Activated CD4-positive, alpha-beta memory T cell treated with anti-CD3 and anti-CD28 coated beads, Interleukin-2, amount 10 ng/mL, durations not matched to agents 7 days and 5 days (primary cell): ENCODE measurements at regions of chr13 and their contacts with region 1.

Region 1: DNA sequence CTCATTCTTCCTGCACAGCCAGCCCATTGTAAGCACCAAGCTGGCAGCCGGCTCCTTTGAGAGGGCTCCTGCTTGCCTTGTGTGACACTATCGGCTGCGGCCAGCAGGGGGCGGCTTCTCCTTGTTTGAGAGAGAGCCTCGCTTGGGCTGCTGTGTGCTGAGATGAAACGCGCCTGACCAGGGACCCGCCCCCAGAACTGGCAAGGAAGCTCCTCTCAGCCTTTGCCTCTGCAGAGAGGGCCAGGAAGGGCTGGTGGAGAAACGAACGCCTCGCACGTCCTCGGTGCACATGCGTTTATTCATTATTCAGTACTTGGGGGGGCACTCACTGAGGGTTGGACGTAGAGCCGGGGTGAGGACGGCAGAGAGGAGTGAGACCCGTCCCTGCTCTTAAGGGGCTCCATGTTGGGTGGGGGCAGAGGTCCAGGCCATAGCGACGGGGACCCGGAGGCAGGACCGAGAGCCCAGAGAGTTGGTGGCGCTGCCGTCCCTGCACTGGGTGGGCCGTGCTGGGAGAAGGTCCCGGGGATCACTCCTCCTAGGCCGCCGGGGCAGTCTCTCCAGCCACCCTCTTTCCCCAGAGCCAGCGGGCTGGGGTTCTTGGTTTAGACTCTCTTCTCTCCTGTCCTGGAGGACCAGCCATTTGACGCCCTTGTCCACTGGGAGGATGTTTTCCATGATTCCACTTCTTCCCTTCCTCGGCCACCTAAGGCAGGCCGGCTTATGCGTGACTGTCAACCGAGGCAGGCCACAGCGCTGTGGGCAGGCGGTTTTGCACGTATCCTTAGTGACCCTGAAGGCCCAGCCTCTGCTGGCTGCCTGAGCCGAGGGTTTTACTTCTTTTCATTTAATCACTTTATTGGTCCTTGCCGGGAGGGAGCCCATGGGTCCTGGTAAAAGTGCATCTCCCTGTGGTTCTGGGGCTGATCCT is 174.5 kb downstream of the KATNAL1 start:
- DNase-seq: peak; percentile 98
- H3K4me3 Mint-ChIP-seq: no peak overlapping the region
- H3K27ac Mint-ChIP-seq: peak overlapping the region; percentile 21
- H3K4me1 Mint-ChIP-seq: peaks cover 11% of the 10 kb centered on the region
- H3K27me3 Mint-ChIP-seq: no peaks in the 10 kb centered on the region

Region 2: DNA sequence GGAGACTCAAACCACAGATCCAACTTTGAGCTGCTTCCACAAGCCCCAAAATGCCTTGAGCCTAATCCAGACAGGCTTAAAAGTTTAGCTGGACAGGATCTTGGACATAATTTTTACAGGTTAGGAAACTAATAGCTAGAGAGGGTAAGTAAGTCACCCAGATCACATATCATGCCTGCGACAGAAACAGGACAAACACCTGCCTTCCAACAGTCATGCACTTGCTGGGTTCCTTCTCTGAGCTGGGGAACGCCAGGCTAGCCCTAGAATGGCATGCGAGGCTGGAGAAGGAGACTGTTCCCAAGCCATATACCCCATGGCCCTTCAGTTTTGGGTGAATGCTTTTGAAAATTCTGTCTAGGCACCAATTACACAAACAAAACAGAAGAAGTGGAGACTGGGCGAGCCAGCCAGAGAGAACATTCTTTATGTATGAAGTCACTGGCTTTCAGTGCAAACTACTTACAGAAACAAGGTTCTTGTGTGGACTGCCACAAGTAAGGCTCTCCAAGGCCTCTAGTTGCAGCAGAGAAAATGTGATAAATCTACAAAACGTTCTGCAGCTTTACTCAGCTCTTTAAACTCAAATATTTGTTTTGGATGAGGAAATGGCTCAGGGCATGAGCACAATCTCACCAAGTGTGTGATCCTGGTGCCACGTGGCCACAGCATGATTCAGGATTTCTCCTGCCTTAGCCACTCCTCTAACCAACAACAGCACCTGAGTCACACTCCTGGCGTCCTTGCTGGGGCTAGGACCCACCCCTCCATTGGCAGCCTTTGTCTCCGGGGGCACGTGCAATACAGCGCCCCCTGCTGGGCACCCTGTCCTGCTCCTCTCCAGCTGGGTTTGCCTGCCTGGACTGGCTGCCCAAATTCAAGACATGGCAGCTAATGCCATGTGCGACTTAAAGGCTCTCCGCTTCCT is 209.1 kb before region 1 on chr13:
- CTCF ChIA-PET with region 1: no interaction called
- POLR2A ChIA-PET with region 1: no interaction called
- DNase-seq: peak; percentile 60
- H3K4me3 Mint-ChIP-seq: no peak overlapping the region
- H3K27ac Mint-ChIP-seq: no peak overlapping the region
- H3K4me1 Mint-ChIP-seq: peaks cover 38% of the 10 kb centered on the region
- H3K27me3 Mint-ChIP-seq: no peaks in the 10 kb centered on the region

Region 3: DNA sequence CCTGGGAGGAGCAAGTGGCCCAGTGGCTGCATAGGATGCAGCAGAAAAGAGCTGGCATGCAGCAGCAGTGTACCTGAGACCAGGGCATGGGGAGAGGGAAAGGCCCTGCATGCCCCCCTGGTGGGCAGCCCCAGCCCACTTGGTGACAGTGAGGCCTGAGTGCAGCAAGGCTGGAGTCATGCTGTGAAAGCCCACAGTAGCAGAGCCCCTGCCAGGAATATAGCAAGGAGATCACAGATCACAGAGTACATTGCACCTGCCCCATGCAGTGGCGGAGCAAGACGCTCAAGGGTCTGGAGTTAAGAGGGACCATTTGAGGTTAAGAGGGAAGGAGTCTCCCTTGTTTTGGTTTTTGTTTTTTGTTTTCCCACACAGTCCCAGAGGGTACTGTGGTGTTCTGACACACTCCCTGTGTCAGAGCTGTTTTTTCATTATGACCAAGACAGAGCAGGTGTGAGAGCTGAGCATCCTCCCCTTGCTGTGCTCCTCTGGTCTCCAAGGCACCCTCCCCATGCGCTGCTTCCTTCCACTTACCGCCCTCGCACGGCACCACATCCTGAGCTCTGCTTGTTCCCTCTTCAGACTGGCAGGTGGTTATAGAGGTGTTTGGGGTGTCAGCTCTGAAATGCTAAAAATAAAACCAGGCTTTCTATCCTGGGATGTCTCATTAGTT is 197.4 kb before region 1 on chr13:
- CTCF ChIA-PET with region 1: interaction called, 12 read pairs
- POLR2A ChIA-PET with region 1: no interaction called
- DNase-seq: peak; percentile 91
- H3K4me3 Mint-ChIP-seq: peak overlapping the region; percentile 86
- H3K27ac Mint-ChIP-seq: peak overlapping the region; percentile 95
- H3K4me1 Mint-ChIP-seq: peaks cover 56% of the 10 kb centered on the region
- H3K27me3 Mint-ChIP-seq: no peaks in the 10 kb centered on the region

Region 4: GRCh38 chr13:30158774-30159445 is 26.0 kb after region 1 on chr13:
- CTCF ChIA-PET with region 1: interaction called, 160 read pairs
- POLR2A ChIA-PET with region 1: interaction called, 17 read pairs
- DNase-seq: peak; percentile 36
- H3K4me3 Mint-ChIP-seq: no peak overlapping the region
- H3K27ac Mint-ChIP-seq: no peak overlapping the region
- H3K4me1 Mint-ChIP-seq: peaks cover 54% of the 10 kb centered on the region
- H3K27me3 Mint-ChIP-seq: peaks cover 2% of the 10 kb centered on the region

Region 5: GRCh38 chr13:30306762-30307193 is 173.9 kb after region 1 on chr13:
- CTCF ChIA-PET with region 1: interaction called, 23 read pairs
- POLR2A ChIA-PET with region 1: interaction called, 5 read pairs
- DNase-seq: peak; percentile 92
- H3K4me3 Mint-ChIP-seq: peak overlapping the region; percentile 77
- H3K27ac Mint-ChIP-seq: peak overlapping the region; percentile 78
- H3K4me1 Mint-ChIP-seq: peaks cover 49% of the 10 kb centered on the region
- H3K27me3 Mint-ChIP-seq: no peaks in the 10 kb centered on the region

Region 6: GRCh38 chr13:30346153-30346788 is 213.4 kb after region 1 on chr13:
- CTCF ChIA-PET with region 1: interaction called, 14 read pairs
- POLR2A ChIA-PET with region 1: interaction called, 3 read pairs
- DNase-seq: peak; percentile 91
- H3K4me3 Mint-ChIP-seq: peak overlapping the region; percentile 38
- H3K27ac Mint-ChIP-seq: peak overlapping the region; percentile 60
- H3K4me1 Mint-ChIP-seq: peaks cover 37% of the 10 kb centered on the region
- H3K27me3 Mint-ChIP-seq: no peaks in the 10 kb centered on the region

Region 7: GRCh38 chr13:30572859-30573275 is 440.0 kb after region 1 on chr13:
- CTCF ChIA-PET with region 1: interaction called, 15 read pairs
- POLR2A ChIA-PET with region 1: interaction called, 3 read pairs
- DNase-seq: peak; percentile 24
- H3K4me3 Mint-ChIP-seq: peak overlapping the region; percentile 51
- H3K27ac Mint-ChIP-seq: peak overlapping the region; percentile 38
- H3K4me1 Mint-ChIP-seq: peaks cover 49% of the 10 kb centered on the region
- H3K27me3 Mint-ChIP-seq: peaks cover 10% of the 10 kb centered on the region